ENCODE measurements at regions of chr18 and their contacts with region 1.

Region 1: GRCh38 chr18:76803814-76804213 is 18.5 kb upstream of the ZNF236 start:
- DNase-seq: peak; percentile 53 to 73 (median 69)
- H3K4me3 ChIP-seq: no peak overlapping the region
- H3K27ac ChIP-seq: no peak overlapping the region
- H3K4me1 ChIP-seq: peaks cover 2% of the 10 kb centered on the region
- H3K27me3 ChIP-seq: no peaks in the 10 kb centered on the region
- CTCF ChIP-seq: peak; percentile 48 to 75 (median 51)
- EP300 ChIP-seq: no peak
- POLR2A ChIP-seq: no peak

Region 2: GRCh38 chr18:76754351-76754750 is 49.5 kb before region 1 on chr18:
- intact Hi-C with region 1: no loop called
- DNase-seq: no peak
- H3K4me3 ChIP-seq: no peak overlapping the region
- H3K27ac ChIP-seq: no peak overlapping the region
- H3K4me1 ChIP-seq: no peaks in the 10 kb centered on the region
- H3K27me3 ChIP-seq: no peaks in the 10 kb centered on the region
- CTCF ChIP-seq: no peak
- EP300 ChIP-seq: no peak
- POLR2A ChIP-seq: no peak

Region 3: GRCh38 chr18:76875390-76876325 is 71.8 kb after region 1 on chr18:
- intact Hi-C with region 1: loop called in 1 of 4 experiments (anchors 10 kb)
- DNase-seq: peak in 1 of 5 donors; percentile 37
- H3K4me3 ChIP-seq: no peak overlapping the region
- H3K27ac ChIP-seq: no peak overlapping the region
- H3K4me1 ChIP-seq: no peaks in the 10 kb centered on the region
- H3K27me3 ChIP-seq: no peaks in the 10 kb centered on the region
- CTCF ChIP-seq: peak in 1 of 3 donors; percentile 27
- EP300 ChIP-seq: no peak
- POLR2A ChIP-seq: no peak

Region 4: GRCh38 chr18:76982841-76983587 is 179.2 kb after region 1 on chr18:
- intact Hi-C with region 1: loop called in 3 of 4 experiments (anchors 5 kb)
- DNase-seq: peak; percentile 74 to 88 (median 85)
- H3K4me3 ChIP-seq: no peak overlapping the region
- H3K27ac ChIP-seq: no peak overlapping the region
- H3K4me1 ChIP-seq: no peaks in the 10 kb centered on the region
- H3K27me3 ChIP-seq: no peaks in the 10 kb centered on the region
- CTCF ChIP-seq: peak; percentile 69 to 73 (median 72)
- EP300 ChIP-seq: no peak
- POLR2A ChIP-seq: no peak

Region 5: GRCh38 chr18:77067291-77068061 is 263.7 kb after region 1 on chr18:
- intact Hi-C with region 1: no loop called
- DNase-seq: peak; percentile 62 to 77 (median 69)
- H3K4me3 ChIP-seq: no peak overlapping the region
- H3K27ac ChIP-seq: peak overlapping the region in 1 of 2 donors; percentile 72
- H3K4me1 ChIP-seq: peaks cover 17% of the 10 kb centered on the region
- H3K27me3 ChIP-seq: no peaks in the 10 kb centered on the region
- CTCF ChIP-seq: peak in 1 of 3 donors; percentile 14
- EP300 ChIP-seq: no peak
- POLR2A ChIP-seq: no peak

Measured in ovary (tissue), 10 donors.